ENCODE measurements at regions of chr1 and their contacts with region 1.

Region 1: GRCh38 chr1:150561974-150562445 is 12.8 kb downstream of the ADAMTSL4 start:
- DNase-seq: peak; percentile 91
- ATAC-seq: peak; percentile 58
- H3K4me3 ChIP-seq: peak overlapping the region; percentile 24
- H3K27ac ChIP-seq: peak overlapping the region; percentile 96
- H3K4me1 ChIP-seq: peaks cover 31% of the 10 kb centered on the region
- H3K27me3 ChIP-seq: no peaks in the 10 kb centered on the region
- CTCF ChIP-seq: no peak
- POLR2A ChIP-seq: peak; percentile 46
- RAD21 ChIP-seq: no peak

Region 2: DNA sequence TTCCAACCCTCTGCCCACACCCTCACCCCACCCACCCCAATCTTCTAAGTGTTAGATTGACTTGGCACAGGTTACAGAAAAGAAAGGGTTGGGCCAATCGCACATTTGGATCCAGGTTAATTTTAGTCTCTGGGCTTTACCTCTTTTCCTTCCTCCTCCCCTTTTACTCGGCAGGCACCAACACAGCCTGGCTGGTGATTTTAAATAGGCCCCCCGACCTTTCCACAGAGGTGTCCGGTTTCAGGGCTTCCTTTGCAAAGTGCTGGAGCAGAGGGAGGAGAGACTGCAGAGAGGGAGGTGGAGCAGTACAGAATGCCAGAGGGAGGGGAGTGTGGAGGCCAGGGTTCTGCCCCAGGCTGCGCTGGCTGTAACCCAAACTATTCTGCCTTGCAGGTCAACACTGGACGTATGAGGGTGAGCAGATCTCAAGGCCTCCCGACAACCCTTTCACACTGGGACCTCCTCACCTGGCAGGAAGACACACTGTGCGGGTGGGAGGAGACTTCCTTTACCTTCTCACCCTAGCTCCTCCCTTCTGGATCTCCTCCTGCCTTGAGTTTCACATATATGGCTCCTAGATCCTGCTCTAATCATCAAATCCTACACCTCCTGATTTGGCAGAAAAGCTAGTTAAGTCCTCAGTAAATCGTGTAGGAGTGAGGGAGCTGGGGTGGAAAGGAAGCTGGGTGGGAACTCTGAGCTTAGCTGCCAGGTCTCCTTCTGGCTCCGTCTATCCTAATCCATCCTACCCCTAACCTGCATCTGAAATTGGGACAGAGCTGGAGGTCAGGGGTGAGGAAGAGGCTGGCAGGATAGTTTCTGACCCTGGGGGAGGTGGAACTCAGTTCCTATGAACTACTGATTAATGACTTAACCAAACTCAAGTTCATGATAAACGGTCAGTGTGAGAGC is 302.0 kb before region 1 on chr1:
- CTCF ChIA-PET with region 1: no interaction called
- POLR2A ChIA-PET with region 1: no interaction called
- dilution Hi-C with region 1: no loop called
- in situ Hi-C with region 1: loop called (anchors 10 kb)
- intact Hi-C with region 1: loop called (anchors 5 kb)
- DNase-seq: no peak
- ATAC-seq: peak; percentile 64
- H3K4me3 ChIP-seq: no peak overlapping the region
- H3K27ac ChIP-seq: no peak overlapping the region
- H3K4me1 ChIP-seq: peaks cover 24% of the 10 kb centered on the region
- H3K27me3 ChIP-seq: no peaks in the 10 kb centered on the region
- CTCF ChIP-seq: no peak
- POLR2A ChIP-seq: no peak
- RAD21 ChIP-seq: no peak

Region 3: DNA sequence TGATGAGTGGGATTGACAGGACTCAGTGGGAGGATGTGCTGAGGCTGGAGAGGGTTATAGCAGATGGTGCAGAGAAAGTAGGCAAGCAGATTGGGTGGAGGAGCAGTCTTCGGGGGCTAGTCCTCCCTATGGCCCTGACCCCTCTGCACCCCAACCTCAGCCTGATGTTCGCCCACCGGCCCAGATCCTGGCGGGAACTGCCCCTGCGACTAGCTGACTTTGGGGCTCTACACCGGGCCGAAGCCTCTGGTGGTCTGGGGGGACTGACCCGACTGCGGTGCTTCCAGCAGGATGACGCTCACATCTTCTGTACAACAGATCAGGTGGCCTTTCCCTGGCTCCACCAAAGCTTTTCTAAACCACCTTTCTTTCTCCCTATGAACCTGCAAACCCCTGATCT is 63.7 kb before region 1 on chr1:
- CTCF ChIA-PET with region 1: no interaction called
- POLR2A ChIA-PET with region 1: no interaction called
- dilution Hi-C with region 1: no loop called
- in situ Hi-C with region 1: no loop called
- intact Hi-C with region 1: no loop called
- DNase-seq: no peak
- ATAC-seq: no peak
- H3K4me3 ChIP-seq: no peak overlapping the region
- H3K27ac ChIP-seq: no peak overlapping the region
- H3K4me1 ChIP-seq: no peaks in the 10 kb centered on the region
- H3K27me3 ChIP-seq: no peaks in the 10 kb centered on the region
- CTCF ChIP-seq: no peak
- POLR2A ChIP-seq: no peak
- RAD21 ChIP-seq: no peak

Region 4: DNA sequence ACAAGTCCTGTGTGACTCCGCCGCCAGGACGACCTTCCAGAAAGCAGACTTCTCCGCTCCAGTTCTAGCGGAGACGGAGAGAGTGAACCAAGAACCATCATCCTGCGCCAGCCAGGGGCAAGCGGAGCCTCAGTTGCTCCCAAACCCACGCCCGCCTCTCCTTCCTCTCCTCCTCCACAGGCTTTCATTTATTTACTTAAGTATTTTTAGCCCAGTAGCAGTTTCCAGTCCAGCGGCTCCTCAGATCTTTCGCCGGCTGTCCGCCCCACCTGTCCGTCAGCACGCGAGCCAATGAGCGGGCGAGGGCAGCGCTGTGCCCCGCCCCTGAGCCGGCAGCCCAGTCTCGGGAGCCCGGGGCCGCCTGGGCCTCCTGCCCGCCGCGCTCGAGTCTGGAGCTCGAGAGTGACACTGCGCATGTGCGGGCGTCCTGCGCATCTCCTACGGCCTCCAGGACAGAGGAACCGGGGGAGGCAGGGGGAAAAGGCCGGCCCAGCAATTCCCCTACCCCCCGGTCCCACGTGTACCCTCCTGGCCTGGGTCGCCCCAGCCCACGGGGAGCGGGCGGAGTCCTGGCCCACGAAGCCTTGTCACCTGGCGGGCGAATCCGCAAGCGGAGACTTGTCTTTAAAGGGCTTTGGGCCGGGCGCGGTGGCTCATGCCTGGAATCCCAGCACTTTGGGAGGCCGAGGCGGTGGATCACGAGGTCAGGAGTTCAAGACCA is 46.5 kb before region 1 on chr1 and contains the start of gene FALEC:
- CTCF ChIA-PET with region 1: no interaction called
- POLR2A ChIA-PET with region 1: no interaction called
- dilution Hi-C with region 1: no loop called
- in situ Hi-C with region 1: no loop called
- intact Hi-C with region 1: no loop called
- DNase-seq: peak; percentile 93
- ATAC-seq: peak; percentile 99
- H3K4me3 ChIP-seq: peak within 1 kb of the TSS; percentile 48
- H3K27ac ChIP-seq: peak within 1 kb of the TSS; percentile 72
- H3K4me1 ChIP-seq: peaks cover 6% of the 10 kb centered on the region
- H3K27me3 ChIP-seq: no peaks in the 10 kb centered on the region
- CTCF ChIP-seq: no peak
- POLR2A ChIP-seq: 0 out of 2 replicates have a peak, but pooled peaks have one; percentile 7
- RAD21 ChIP-seq: no peak
- total RNA-seq, gene FALEC: not detected in 2 replicates

Region 5: DNA sequence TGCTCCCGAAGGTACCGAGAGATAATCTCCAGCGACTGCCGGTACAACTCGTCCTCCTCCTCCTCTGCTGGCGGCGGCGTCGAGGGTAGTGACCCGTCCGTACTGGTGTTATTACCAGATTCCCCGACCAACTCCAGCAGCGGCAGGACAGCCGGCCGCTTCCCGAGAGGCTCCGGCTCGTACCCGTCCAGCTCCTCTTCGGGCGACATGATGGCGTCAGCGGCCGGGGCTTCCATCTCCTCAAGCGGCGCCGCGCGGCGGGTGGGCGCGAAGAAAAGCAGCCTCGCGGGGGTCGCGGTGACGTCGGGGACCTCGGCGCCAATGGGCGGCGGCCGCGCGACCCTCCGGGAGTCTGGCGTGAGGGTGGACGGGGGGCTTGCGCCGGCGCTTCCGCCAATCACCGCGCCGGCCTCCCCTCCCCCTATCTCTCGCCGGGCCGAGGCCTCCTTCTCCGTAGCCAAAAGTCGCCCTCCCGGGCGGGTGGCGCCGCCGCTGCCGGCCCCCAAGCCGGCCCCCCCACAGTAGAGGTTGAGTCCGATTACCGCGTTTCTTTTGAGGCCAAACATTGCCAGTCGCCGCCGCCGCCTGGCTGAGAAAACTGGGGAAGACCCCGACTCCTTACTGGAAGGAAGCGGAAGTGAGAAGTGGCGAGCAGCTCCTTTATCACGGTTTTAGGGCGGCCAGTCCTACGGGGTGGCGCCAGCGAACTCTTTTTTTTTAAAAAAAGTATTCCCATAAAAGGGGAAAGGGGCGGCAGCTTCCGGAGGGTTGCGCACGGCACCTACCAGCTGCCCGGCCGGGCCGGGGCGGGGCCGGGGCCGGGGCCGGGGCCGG is 17.2 kb after region 1 on chr1 and contains the start of gene MCL1:
- CTCF ChIA-PET with region 1: interaction called, 5 read pairs
- POLR2A ChIA-PET with region 1: interaction called, 24 read pairs
- dilution Hi-C with region 1: no loop called
- in situ Hi-C with region 1: no loop called
- intact Hi-C with region 1: loop called (anchors 1 kb)
- DNase-seq: peak; percentile 96
- ATAC-seq: peak; percentile 80
- H3K4me3 ChIP-seq: peak within 1 kb of the TSS; percentile 93
- H3K27ac ChIP-seq: peak within 1 kb of the TSS; percentile 95
- H3K4me1 ChIP-seq: peaks cover 8% of the 10 kb centered on the region
- H3K27me3 ChIP-seq: no peaks in the 10 kb centered on the region
- CTCF ChIP-seq: 0 out of 2 replicates have a peak, but pooled peaks have one; percentile 16
- POLR2A ChIP-seq: peak; percentile 99
- RAD21 ChIP-seq: peak; percentile 27; the same call in 1 of the 2 replicates
- total RNA-seq, gene MCL1: 142 and 212 TPM in 2 replicates

Region 6: DNA sequence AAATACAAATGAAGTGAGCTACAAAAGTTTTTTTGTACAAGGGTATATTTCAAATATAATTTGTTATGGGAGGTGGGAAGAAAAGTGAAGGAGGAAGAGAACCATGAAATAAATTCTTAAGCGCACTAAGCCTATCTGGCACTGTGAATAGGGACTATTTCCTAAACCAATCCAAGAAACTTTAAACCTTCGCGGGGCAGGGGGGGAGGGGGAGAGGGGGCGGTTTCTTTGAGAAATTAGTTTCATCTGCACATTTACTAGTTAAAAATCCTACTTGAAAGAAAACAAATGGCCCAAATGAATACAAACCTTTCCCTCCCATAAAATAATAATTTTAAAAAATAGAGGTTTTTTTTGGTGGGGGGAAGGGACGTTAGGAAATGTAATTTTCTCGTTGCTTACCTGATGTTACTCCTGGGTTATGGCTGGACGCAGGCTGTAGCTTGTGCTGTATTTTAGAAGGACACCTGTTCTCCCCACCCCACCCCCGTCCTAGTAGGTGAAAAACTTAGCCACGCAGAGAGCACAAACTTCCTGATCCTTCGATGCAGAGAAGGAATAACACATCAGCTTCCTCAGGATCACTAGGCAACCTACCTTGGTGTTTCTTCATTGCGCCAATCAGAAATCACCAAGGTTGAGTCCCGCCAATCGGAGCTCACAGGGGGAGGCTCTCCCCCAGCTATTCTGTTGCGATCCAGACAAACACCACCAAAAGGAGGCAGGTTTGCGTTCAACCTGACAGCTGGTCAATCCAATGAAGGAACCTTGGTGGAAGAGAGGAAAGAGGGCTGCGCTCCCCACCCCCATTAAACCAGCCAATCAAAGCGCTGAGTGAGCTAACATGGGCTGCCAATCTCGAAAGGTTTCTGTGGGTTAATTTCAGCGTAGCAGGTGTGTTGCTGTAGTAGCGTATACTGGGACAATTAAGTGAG is 134.8 kb after region 1 on chr1 and contains the start of gene GOLPH3L:
- CTCF ChIA-PET with region 1: interaction called, 5 read pairs
- POLR2A ChIA-PET with region 1: no interaction called
- dilution Hi-C with region 1: no loop called
- in situ Hi-C with region 1: no loop called
- intact Hi-C with region 1: loop called (anchors 5 kb)
- DNase-seq: peak; percentile 98
- ATAC-seq: peak; percentile 100
- H3K4me3 ChIP-seq: peak within 1 kb of the TSS; percentile 74
- H3K27ac ChIP-seq: 0 out of 2 replicates have a peak within 1 kb of the TSS, but pooled peaks have one; percentile 13
- H3K4me1 ChIP-seq: no peaks in the 10 kb centered on the region
- H3K27me3 ChIP-seq: no peaks in the 10 kb centered on the region
- CTCF ChIP-seq: peak; percentile 29
- POLR2A ChIP-seq: peak; percentile 70
- RAD21 ChIP-seq: no peak
- total RNA-seq, gene GOLPH3L: 9.5 and 11.7 TPM in 2 replicates

Region 7: DNA sequence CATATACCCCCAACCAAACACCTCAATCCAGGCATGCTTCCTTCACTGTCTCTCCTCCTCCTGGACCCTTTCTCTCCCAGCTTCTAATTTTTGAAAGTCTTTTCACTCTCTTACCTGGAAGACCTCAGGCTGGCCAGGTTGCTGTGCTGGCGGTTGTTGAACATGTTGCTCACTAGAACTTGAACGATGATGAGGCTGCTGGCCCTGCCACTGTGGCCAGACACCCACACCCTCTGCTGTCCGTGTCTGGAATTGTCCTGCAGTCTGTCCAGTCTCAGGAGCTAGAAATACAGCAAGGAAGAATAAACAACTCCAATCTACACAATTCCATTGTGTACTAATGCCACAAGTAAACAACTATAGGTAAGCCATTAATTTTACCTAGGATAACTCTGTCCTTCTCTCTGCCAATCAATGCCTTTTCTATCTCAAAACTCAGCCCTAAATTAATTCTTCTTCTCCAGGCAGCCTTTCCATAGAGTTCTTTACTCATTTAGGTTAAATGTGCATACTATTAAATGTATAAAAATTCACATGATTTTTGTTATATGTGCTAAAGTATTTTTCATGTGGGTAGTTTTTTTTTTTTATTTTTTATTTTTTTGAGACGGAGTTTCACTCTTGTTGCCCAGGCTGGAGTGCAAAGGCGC is 251.2 kb after region 1 on chr1:
- CTCF ChIA-PET with region 1: interaction called, 3 read pairs
- POLR2A ChIA-PET with region 1: no interaction called
- dilution Hi-C with region 1: no loop called
- in situ Hi-C with region 1: loop called (anchors 10 kb)
- intact Hi-C with region 1: loop called (anchors 1 kb)
- DNase-seq: peak; percentile 77
- ATAC-seq: peak; percentile 94
- H3K4me3 ChIP-seq: no peak overlapping the region
- H3K27ac ChIP-seq: no peak overlapping the region
- H3K4me1 ChIP-seq: peaks cover 3% of the 10 kb centered on the region; the same call in 1 of the 2 replicates
- H3K27me3 ChIP-seq: no peaks in the 10 kb centered on the region
- CTCF ChIP-seq: peak; percentile 82
- POLR2A ChIP-seq: no peak
- RAD21 ChIP-seq: peak; percentile 92

Region 8: GRCh38 chr1:150922519-150922975 is 360.5 kb after region 1 on chr1:
- CTCF ChIA-PET with region 1: no interaction called
- POLR2A ChIA-PET with region 1: no interaction called
- dilution Hi-C with region 1: no loop called
- in situ Hi-C with region 1: no loop called
- intact Hi-C with region 1: loop called (anchors 5 kb)
- DNase-seq: peak; percentile 93
- ATAC-seq: peak; percentile 63
- H3K4me3 ChIP-seq: no peak overlapping the region
- H3K27ac ChIP-seq: no peak overlapping the region
- H3K4me1 ChIP-seq: peaks cover 2% of the 10 kb centered on the region; the same call in 1 of the 2 replicates
- H3K27me3 ChIP-seq: no peaks in the 10 kb centered on the region
- CTCF ChIP-seq: peak; percentile 86
- POLR2A ChIP-seq: no peak
- RAD21 ChIP-seq: peak; percentile 76